Left colon (tissue), 2 donors: ENCODE measurements at regions of chr9 and their contacts with region 1.

Region 1: DNA sequence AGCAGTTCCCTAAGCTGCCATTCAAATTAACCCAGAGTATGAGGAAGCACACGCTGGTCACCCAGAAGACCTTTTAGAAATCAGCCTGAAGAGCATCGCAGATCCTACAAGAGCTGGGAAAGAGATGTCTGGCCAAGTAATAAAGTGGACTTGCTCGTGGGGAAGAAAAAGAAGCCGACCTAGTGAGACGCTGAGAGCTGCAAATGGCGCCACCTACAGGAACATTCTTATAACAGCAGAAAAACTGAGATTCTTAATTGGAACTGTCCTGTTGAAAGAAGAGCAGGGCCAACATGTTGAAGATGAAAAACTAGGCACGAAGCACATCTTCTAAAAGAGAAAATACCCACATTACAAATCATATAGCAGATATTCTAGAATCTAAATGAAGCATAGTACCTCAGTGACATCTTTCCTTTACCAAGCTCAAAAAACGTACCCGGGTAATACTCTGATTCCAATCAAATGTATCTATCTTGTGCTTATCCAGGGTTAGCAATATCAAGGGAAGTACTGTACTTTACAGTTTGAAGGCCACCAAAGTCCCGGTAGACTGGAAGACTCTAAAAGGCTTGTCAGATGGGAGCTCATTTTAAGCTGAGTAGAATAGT is 3.9 kb upstream of the GNAQ start:
- DNase-seq: peak in 1 of 2 donors; percentile 41
- ATAC-seq: peak; percentile 11

Region 2: GRCh38 chr9:77841739-77842386 is 193.6 kb before region 1 on chr9:
- intact Hi-C with region 1: loop called in 1 of 2 experiments (anchors 10 kb)
- DNase-seq: no peak
- ATAC-seq: peak; percentile 19